ENCODE measurements at regions of chr2 and their contacts with region 1.

Region 1: GRCh38 chr2:38728694-38729093 is 22.5 kb downstream of the SRSF7 start:
- DNase-seq: no peak
- ATAC-seq: no peak
- H3K4me3 ChIP-seq: no peak overlapping the region
- H3K27ac ChIP-seq: no peak overlapping the region
- H3K4me1 ChIP-seq: no peaks in the 10 kb centered on the region
- H3K27me3 ChIP-seq: no peaks in the 10 kb centered on the region
- CTCF ChIP-seq: no peak
- POLR2A ChIP-seq: no peak
- RAD21 ChIP-seq: no peak

Region 2: GRCh38 chr2:38535744-38536506 is 192.8 kb before region 1 on chr2:
- CTCF ChIA-PET with region 1: interaction called, 4 read pairs
- POLR2A ChIA-PET with region 1: no interaction called
- dilution Hi-C with region 1: no loop called
- in situ Hi-C with region 1: no loop called
- intact Hi-C with region 1: loop called (anchors 5 kb)
- DNase-seq: peak; percentile 46
- ATAC-seq: peak; percentile 94
- H3K4me3 ChIP-seq: peak overlapping the region; percentile 51
- H3K27ac ChIP-seq: no peak overlapping the region; the same call in 1 of the 2 replicates
- H3K4me1 ChIP-seq: no peaks in the 10 kb centered on the region
- H3K27me3 ChIP-seq: peaks cover 10% of the 10 kb centered on the region; the same call in 1 of the 2 replicates
- CTCF ChIP-seq: peak; percentile 80
- POLR2A ChIP-seq: no peak
- RAD21 ChIP-seq: peak; percentile 71

Region 3: DNA sequence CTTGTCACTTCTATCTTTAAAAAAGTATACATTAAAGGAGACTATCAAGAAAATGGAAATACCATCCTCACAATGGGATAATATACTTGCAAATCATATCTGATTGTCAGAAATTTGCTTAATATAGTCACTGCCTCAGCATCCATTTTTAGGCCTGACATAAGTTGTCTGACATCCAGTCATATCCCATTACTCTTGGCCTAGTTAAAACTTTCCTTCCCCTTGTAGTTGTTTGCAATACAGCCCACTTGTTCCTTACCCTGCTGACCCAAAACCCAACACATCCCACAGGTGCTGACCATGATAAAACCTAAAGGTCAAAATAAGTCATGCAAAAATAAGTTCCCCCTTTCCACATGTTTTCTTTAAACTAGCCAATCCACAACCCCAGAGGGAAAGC is 157.4 kb after region 1 on chr2:
- CTCF ChIA-PET with region 1: no interaction called
- POLR2A ChIA-PET with region 1: no interaction called
- dilution Hi-C with region 1: no loop called
- in situ Hi-C with region 1: no loop called
- intact Hi-C with region 1: no loop called
- DNase-seq: no peak
- ATAC-seq: no peak
- H3K4me3 ChIP-seq: no peak overlapping the region
- H3K27ac ChIP-seq: no peak overlapping the region
- H3K4me1 ChIP-seq: no peaks in the 10 kb centered on the region
- H3K27me3 ChIP-seq: no peaks in the 10 kb centered on the region
- CTCF ChIP-seq: no peak
- POLR2A ChIP-seq: no peak
- RAD21 ChIP-seq: no peak

Measured in IMR-90 (cell line).